Aorta (tissue), 5 donors: ENCODE measurements at regions of chr9 and their contacts with region 1.

Region 1: DNA sequence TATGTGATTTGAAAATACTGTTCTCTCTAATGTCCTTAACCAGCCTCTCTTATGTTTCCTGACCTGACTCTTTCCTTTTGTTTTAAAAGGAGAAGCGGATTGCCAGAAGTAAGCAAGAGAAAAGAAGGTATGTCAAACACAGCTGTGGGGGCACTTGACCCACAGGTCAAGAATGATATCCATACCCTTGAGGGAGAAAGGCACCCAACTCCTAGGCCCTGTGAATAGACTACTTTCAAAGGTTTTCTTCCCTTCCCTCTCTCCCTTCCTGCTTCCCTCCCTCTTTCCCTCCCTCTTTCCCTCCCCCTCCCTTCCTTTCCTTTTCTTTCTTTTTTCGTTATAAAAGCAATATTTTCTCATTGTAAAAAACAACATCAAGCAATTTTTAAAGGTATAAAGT is 306.8 kb downstream of the TRPM3 start:
- DNase-seq: no peak
- ATAC-seq: no peak
- H3K4me3 ChIP-seq: no peak overlapping the region
- H3K27ac ChIP-seq: no peak overlapping the region
- H3K4me1 ChIP-seq: no peaks in the 10 kb centered on the region
- H3K27me3 ChIP-seq: peaks cover 0 to 1% of the 10 kb centered on the region in 2 donors

Region 2: GRCh38 chr9:70784456-70784855 is 30.1 kb before region 1 on chr9:
- intact Hi-C with region 1: loop called in 1 of 2 experiments (anchors 2 kb)
- DNase-seq: no peak
- ATAC-seq: no peak
- H3K4me3 ChIP-seq: no peak overlapping the region
- H3K27ac ChIP-seq: no peak overlapping the region
- H3K4me1 ChIP-seq: no peaks in the 10 kb centered on the region
- H3K27me3 ChIP-seq: no peaks in the 10 kb centered on the region

Region 3: DNA sequence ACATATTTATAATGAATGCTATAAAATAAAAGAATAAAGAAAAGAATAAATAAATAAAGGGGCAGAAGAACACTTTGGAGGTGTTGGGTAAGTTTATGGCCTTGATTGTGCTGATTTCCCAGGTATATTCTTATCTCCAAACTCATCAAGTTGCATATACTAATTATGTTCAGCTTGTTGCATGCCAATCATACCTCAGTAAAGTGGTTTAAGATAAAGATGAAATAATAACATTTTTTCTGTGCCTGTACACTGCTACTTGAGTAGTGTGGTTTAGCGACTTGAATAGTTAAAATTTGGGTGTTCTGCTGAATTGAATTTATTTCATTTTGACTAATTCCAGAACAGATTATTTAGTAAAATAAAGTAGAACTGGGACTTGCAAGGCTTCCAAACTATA is 35.8 kb after region 1 on chr9:
- intact Hi-C with region 1: no loop called
- DNase-seq: no peak
- ATAC-seq: no peak
- H3K4me3 ChIP-seq: no peak overlapping the region
- H3K27ac ChIP-seq: no peak overlapping the region
- H3K4me1 ChIP-seq: no peaks in the 10 kb centered on the region
- H3K27me3 ChIP-seq: no peaks in the 10 kb centered on the region

Region 4: GRCh38 chr9:70954126-70954525 is 139.5 kb after region 1 on chr9:
- intact Hi-C with region 1: no loop called
- DNase-seq: no peak
- ATAC-seq: no peak
- H3K4me3 ChIP-seq: no peak overlapping the region
- H3K27ac ChIP-seq: no peak overlapping the region
- H3K4me1 ChIP-seq: peaks cover 3 to 7% of the 10 kb centered on the region in 2 donors
- H3K27me3 ChIP-seq: no peaks in the 10 kb centered on the region